ENCODE measurements at regions of chr1 and their contacts with region 1.

Region 1: DNA sequence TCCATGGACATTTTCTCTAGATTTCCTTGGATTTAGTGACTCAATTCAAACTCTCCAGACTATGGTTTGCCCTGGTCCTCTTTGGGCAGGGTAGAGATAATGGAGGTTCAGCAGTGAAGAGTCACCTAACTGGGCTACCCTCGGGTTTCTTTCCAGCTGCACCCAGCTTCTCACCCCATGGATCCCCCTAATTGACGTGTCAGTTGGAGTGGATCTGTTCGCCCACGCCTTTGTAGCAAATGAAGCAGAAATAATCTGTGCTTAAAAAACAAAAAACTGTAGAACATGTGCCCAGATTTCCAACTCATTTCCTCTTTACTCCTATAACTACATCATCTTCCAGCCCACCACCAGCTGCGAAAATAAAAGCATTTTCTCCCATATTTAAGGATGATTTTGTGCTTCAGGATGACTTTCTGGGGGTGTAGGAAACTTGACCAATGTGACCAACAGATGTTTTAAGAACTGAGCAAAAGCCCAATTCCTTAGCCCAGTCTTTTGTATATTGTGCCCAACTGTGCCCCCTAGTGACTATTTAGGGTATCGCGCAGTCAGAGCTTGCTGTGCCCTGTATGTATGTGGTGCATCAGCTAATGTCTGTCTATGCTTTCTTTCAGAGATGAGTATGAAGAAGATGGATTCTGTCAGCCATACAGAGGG is 66.5 kb upstream of the UBE2U start:
- DNase-seq: peak; percentile 89
- H3K4me3 ChIP-seq: no peak overlapping the region
- H3K27ac ChIP-seq: peak overlapping the region; percentile 45
- H3K4me1 ChIP-seq: peaks cover 44% of the 10 kb centered on the region
- H3K27me3 ChIP-seq: no peaks in the 10 kb centered on the region

Region 2: DNA sequence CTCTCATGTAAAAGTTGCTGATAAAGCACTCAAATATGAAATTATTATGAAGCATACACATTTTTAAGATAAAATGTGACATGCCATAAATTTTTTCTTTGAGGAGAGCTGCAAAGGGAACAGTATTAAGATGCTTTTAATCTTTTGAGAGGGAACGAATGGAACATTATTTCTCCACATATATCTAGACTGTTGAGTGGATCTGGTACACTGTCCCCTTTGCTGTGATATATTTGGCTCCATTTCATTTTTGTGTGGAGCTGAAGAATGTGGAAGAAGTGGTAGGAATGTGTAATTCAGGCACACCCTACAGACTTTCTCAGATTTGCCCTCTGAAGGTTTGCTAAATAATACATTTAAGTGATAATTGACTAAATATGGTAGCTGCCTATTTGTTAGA is 512.0 kb before region 1 on chr1:
- in situ Hi-C with region 1: loop called (anchors 10 kb)
- DNase-seq: peak; percentile 48
- H3K4me3 ChIP-seq: no peak overlapping the region
- H3K27ac ChIP-seq: no peak overlapping the region
- H3K4me1 ChIP-seq: peaks cover 33% of the 10 kb centered on the region
- H3K27me3 ChIP-seq: no peaks in the 10 kb centered on the region

Region 3: GRCh38 chr1:63691701-63692425 is 445.0 kb before region 1 on chr1:
- in situ Hi-C with region 1: loop called (anchors 10 kb)
- DNase-seq: peak; percentile 89
- H3K4me3 ChIP-seq: no peak overlapping the region
- H3K27ac ChIP-seq: peak overlapping the region; percentile 28
- H3K4me1 ChIP-seq: peaks cover 39% of the 10 kb centered on the region
- H3K27me3 ChIP-seq: no peaks in the 10 kb centered on the region

Region 4: GRCh38 chr1:63713627-63714481 is 423.0 kb before region 1 on chr1:
- in situ Hi-C with region 1: no loop called
- DNase-seq: peak; percentile 93
- H3K4me3 ChIP-seq: peak overlapping the region; percentile 11; the same call in 1 of the 2 replicates
- H3K27ac ChIP-seq: peak overlapping the region; percentile 5; the same call in 1 of the 2 replicates
- H3K4me1 ChIP-seq: peaks cover 14% of the 10 kb centered on the region
- H3K27me3 ChIP-seq: peaks cover under 1% of the 10 kb centered on the region; the same call in 1 of the 2 replicates

Measured in GM23248 (cell line).